AG04449 (cell line): ENCODE measurements at regions of chr9 and their contacts with region 1.

Region 1: DNA sequence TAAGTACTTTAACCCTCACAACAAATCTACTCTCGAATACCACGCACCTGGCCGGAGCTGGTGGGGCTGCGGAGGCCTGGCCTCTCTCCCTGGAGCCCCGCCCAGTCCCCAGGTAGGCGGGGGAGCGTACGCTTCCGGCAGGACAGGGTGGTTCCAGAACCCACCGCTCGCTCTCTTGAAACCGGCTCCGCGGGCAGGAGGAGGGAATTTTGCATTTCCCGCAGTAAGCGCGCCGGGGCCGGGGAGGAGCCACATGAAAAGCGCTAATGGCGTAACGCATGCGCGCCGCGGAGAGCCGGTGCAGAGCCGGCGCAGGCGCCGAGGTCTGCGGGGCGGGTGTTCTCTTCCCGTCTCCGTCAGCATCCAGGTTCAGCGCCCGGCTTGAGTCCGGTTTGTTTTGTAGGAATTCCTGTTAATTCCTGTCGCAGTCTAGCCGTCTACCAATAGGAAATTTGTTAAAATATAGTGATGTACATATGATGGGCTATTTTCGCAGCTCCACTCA is 20.8 kb downstream of the CAVIN4 start:
- DNase-seq: no peak
- H3K4me3 ChIP-seq: peak overlapping the region; percentile 64
- CTCF ChIP-seq: no peak

Region 2: GRCh38 chr9:100322954-100323536 is 275.6 kb before region 1 on chr9:
- CTCF ChIA-PET with region 1: interaction called, 40 read pairs
- POLR2A ChIA-PET with region 1: no interaction called
- DNase-seq: no peak
- H3K4me3 ChIP-seq: no peak overlapping the region
- CTCF ChIP-seq: peak; percentile 39

Region 3: DNA sequence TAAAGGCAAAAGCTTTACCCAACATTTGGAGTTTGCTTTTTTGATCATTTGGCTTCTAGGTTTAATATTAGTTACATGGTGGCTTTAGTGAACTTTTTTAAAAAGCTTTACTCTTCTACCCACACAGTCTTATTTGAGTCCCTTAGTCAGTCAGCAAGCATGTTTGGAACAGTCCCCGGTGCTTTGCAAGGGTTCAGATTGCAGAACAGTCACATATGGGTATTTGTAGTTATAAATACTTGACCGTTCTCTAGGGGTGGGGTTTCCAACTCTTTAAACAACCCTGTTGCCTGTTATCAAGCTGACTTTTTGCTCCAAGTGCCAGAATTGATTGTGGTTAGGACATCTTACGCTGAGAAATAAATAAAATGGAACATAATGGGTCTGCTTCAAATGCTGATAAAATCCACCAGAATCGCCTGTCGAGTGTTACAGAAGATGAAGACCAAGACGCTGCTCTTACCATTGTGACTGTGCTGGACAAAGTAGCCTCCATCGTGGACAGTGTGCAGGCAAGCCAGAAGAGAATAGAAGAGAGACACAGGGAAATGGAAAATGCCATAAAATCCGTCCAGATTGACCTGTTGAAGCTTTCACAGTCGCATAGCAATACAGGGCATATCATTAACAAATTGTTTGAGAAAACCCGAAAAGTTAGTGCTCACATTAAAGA is 20.8 kb before region 1 on chr9 and contains the start of gene CAVIN4:
- CTCF ChIA-PET with region 1: interaction called, 143 read pairs
- POLR2A ChIA-PET with region 1: no interaction called
- DNase-seq: no peak
- H3K4me3 ChIP-seq: no peak within 1 kb of the TSS
- CTCF ChIP-seq: no peak

Region 4: GRCh38 chr9:101235105-101235866 is 636.6 kb after region 1 on chr9:
- CTCF ChIA-PET with region 1: interaction called, 28 read pairs
- POLR2A ChIA-PET with region 1: no interaction called
- DNase-seq: no peak
- H3K4me3 ChIP-seq: no peak overlapping the region
- CTCF ChIP-seq: no peak

Region 5: DNA sequence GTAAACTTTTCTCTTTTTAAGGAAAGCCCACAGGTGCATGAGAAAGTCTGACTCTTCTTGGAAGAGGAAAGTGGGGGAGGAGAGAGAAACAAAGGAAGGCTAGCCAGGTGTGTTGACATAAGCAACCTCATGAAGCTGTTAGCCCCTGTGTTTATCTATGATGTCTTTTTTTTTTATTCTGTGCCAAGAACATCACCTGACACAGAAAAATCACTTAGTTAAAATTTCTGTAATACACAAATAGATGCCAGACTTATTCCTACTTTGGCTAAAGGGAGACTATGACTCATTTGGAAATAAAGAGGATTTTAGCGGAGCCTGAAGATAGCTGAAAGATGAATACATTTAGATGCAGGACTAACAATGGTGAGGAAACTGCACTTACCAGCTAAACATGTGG is 727.8 kb after region 1 on chr9:
- CTCF ChIA-PET with region 1: interaction called, 13 read pairs
- POLR2A ChIA-PET with region 1: no interaction called
- DNase-seq: no peak
- H3K4me3 ChIP-seq: no peak overlapping the region
- CTCF ChIP-seq: no peak